ENCODE measurements at regions of chr2 and their contacts with region 1.

Region 1: DNA sequence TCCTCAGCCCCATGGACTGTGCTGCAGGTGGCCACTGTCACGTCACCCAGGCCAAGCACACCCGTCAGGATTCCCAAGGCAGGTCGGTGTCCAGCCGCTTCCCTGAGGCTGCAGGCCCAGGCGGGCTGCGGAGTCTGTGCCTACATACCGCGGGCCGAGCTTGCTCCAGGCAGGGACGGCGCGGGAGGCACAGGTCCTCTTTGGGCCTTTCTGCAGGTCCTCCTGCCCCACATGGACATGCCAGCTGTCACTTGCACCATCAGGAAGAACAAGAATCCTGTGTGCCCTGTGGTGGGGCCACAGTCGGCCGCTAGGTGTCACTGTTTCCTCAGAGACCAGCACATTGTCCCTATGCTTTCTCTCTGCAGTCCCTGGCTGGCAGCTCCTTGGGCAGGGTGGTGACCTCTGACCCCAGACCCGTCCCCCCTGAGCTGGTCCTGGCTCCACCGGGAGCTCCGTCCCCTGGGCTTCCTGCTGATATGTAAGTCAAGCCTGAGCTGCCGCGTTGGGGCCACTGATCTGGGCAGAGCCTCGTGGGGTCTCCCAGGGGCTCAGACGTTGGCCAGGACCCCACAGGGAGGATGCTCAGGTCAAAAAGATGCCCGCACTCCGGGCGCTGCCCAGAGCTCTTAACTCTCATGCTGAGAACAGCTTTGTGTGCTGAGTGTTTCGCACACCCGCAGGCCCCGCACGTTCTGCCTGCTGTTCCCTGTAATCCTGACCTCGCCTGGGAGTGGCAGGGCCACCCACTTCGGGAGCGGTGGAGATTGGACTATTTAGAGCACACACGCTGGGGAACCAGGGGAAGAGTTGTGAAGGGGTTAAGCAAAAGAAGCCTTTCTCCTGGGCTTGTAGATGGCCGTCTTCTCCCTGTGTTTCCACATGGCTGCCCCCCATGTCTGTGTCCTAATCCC is 17.3 kb upstream of the AGXT start:
- DNase-seq: peak; percentile 84
- ATAC-seq: peak; percentile 90 to 93 (median 91)
- H3K4me3 ChIP-seq: no peak overlapping the region
- H3K27ac ChIP-seq: no peak overlapping the region
- H3K4me1 ChIP-seq: peaks cover 0 to 3% (median 0%) of the 10 kb centered on the region in 9 donors
- H3K27me3 ChIP-seq: peaks cover 0 to 8% (median 0%) of the 10 kb centered on the region in 7 donors
- CTCF ChIP-seq: peak; percentile 85 to 98 (median 96)

Region 2: GRCh38 chr2:240832205-240832727 is 19.1 kb before region 1 on chr2:
- intact Hi-C with region 1: no loop called
- DNase-seq: peak; percentile 89 to 94
- ATAC-seq: peak; percentile 72 to 94 (median 86)
- H3K4me3 ChIP-seq: peak overlapping the region in 9 of 10 donors; percentile 20 to 50 (median 41)
- H3K27ac ChIP-seq: no peak overlapping the region
- H3K4me1 ChIP-seq: peaks cover 7 to 19% (median 17%) of the 10 kb centered on the region in 9 donors
- H3K27me3 ChIP-seq: peaks cover 0 to 51% (median 38%) of the 10 kb centered on the region in 7 donors
- CTCF ChIP-seq: no peak

Region 3: DNA sequence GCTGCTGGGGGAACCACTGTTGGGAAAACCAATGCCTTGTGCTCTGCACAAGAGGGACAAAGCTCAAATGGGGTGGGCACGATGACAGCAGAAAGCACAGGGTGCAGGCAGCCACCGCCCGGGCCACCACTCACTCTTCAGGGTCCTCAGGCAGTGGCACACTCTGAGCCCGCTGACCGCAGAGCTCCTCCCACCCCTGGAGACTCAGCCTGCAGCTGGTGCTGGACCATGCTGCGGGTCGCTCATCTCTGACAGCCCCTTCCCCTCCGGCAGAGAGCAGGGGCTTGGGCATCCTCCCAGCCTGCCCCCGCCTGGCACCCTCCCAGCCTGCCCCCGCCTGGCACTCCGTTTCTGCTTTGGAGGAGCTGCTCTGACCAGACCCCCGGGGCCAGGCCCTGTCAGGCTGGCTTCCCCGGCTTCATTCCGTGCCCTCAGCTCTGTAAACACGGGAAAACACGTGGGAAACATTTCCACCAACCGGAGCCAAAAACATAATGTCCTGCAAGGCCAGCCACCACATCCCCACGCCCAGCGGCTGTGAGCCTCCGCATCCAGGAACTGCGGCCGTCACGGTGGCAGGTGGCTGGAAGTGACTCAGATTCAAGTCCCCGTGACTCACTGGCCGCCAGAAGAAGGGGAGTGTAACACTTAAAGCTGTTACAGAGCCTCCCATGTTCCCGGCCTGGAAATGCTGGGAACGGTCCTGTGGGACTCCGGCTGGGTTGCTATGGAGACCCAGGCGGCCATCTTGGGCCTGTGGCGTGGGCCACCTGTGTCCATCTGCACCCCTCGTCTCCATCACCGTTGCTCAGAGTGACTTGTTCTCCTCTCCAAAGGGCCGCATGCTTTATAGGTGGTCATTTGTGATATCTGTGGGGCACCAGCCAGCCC is 140.3 kb after region 1 on chr2:
- intact Hi-C with region 1: loop called in 7 of 10 experiments (anchors 2 to 10 kb)
- DNase-seq: peak; percentile 79 to 83
- ATAC-seq: peak; percentile 61 to 89 (median 80)
- H3K4me3 ChIP-seq: peak overlapping the region in 2 of 10 donors; percentile 5 to 18
- H3K27ac ChIP-seq: peak overlapping the region; percentile 35 to 72 (median 64)
- H3K4me1 ChIP-seq: peaks cover 20 to 61% (median 31%) of the 10 kb centered on the region in 9 donors
- H3K27me3 ChIP-seq: no peaks in the 10 kb centered on the region
- CTCF ChIP-seq: no peak

Region 4: GRCh38 chr2:241069821-241070281 is 218.5 kb after region 1 on chr2:
- intact Hi-C with region 1: loop called in 3 of 10 experiments (anchors 10 kb)
- DNase-seq: no peak
- ATAC-seq: no peak
- H3K4me3 ChIP-seq: no peak overlapping the region
- H3K27ac ChIP-seq: no peak overlapping the region
- H3K4me1 ChIP-seq: no peaks in the 10 kb centered on the region
- H3K27me3 ChIP-seq: no peaks in the 10 kb centered on the region
- CTCF ChIP-seq: no peak

Region 5: DNA sequence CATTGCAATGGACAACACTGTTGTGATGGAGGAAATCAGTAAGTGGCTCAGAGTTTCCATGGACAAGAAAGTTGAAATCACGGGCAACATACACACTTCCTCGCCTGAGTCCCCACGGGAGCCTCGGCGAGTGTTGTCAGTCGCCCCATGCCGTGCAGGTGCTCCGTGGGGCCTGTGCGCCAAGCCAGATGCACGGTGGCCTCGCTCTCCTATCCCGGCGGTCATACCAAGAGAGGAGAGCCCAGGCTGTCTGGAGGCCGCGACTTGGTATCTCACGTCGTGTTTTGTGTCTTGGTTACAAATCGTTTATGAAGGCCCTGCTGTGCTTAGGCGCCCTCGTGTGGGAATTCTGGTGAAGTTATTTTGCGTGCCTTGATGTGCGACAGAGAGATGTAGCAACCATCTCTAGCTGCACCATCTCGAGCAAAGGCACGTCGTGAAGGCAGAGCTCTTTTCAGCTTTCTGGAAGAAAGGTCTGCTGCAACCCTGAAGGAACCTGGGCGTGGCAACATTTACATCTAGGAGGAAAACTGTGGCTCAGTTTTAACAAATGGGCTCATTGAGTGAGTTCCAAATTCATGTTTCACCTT is 807.9 kb after region 1 on chr2:
- intact Hi-C with region 1: loop called in 1 of 10 experiments (anchors 10 kb)
- DNase-seq: peak; percentile 36 to 53
- ATAC-seq: peak in 7 of 8 donors; percentile 35 to 64 (median 52)
- H3K4me3 ChIP-seq: no peak overlapping the region
- H3K27ac ChIP-seq: no peak overlapping the region
- H3K4me1 ChIP-seq: peaks cover 0 to 7% (median 0%) of the 10 kb centered on the region in 9 donors
- H3K27me3 ChIP-seq: no peaks in the 10 kb centered on the region
- CTCF ChIP-seq: peak; percentile 46 to 73 (median 60)

Measured in heart right ventricle (tissue), 16 donors.